MCF 10A (cell line): ENCODE measurements at regions of chr20 and their contacts with region 1.

Region 1: DNA sequence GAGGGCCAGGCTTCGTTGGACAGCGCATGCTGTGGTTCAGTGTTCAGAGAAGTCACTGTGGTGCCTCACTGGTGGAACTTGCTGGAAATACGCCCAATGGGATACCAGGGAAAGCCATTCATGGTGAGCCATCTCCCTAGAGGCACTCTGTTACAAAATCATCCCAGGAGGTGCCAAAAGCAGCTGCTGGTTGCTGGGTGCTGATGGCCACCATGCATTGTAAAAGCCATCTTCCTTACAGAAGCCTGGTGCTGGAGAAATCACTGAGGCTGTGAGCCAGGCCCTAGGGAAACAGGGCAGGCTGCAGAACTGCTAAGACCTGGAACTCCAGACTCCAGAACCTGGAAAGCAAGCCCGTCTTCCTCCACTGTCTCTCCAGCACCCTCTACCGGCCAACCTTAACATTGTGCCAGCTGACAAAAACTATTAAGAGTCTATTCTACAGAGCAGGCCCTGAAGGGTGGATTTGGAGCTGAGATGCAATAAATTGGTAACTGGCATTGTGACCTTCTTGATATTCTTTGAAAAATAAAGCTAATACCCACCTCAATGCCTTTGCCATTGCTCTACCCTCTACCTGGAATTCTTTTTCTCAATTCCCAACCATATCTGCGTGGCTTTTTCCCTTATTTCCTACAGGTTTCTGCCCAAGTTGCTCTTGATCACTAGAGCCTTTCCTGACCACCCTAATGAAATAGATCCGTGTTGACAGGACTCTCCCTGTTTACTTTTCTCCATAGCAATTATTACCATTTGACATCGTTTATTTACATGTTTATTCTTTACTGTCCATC is 18.5 kb downstream of the SNRPB start:
- DNase-seq: peak; percentile 81
- H3K4me3 Mint-ChIP-seq: no peak overlapping the region
- H3K27ac Mint-ChIP-seq: no peak overlapping the region
- H3K4me1 Mint-ChIP-seq: peaks cover 31% of the 10 kb centered on the region
- H3K27me3 Mint-ChIP-seq: no peaks in the 10 kb centered on the region
- CTCF ChIP-seq: peak; percentile 70

Region 2: GRCh38 chr20:1965520-1966351 is 486.4 kb before region 1 on chr20:
- CTCF ChIA-PET with region 1: interaction called, 3 read pairs
- POLR2A ChIA-PET with region 1: no interaction called
- intact Hi-C with region 1: loop called (anchors 10 kb)
- DNase-seq: peak; percentile 73
- H3K4me3 Mint-ChIP-seq: no peak overlapping the region
- H3K27ac Mint-ChIP-seq: no peak overlapping the region
- H3K4me1 Mint-ChIP-seq: no peaks in the 10 kb centered on the region
- H3K27me3 Mint-ChIP-seq: peaks cover 58% of the 10 kb centered on the region
- CTCF ChIP-seq: peak; percentile 94

Region 3: GRCh38 chr20:2206957-2207769 is 245.0 kb before region 1 on chr20:
- CTCF ChIA-PET with region 1: interaction called, 62 read pairs
- POLR2A ChIA-PET with region 1: interaction called, 8 read pairs
- intact Hi-C with region 1: loop called (anchors 1 kb)
- DNase-seq: peak; percentile 64
- H3K4me3 Mint-ChIP-seq: peak overlapping the region; percentile 65
- H3K27ac Mint-ChIP-seq: no peak overlapping the region
- H3K4me1 Mint-ChIP-seq: no peaks in the 10 kb centered on the region
- H3K27me3 Mint-ChIP-seq: peaks cover 8% of the 10 kb centered on the region
- CTCF ChIP-seq: peak; percentile 93

Region 4: GRCh38 chr20:2357114-2357513 is 95.0 kb before region 1 on chr20:
- CTCF ChIA-PET with region 1: interaction called, 22 read pairs
- POLR2A ChIA-PET with region 1: interaction called, 5 read pairs
- intact Hi-C with region 1: no loop called
- DNase-seq: no peak
- H3K4me3 Mint-ChIP-seq: no peak overlapping the region
- H3K27ac Mint-ChIP-seq: no peak overlapping the region
- H3K4me1 Mint-ChIP-seq: peaks cover 12% of the 10 kb centered on the region
- H3K27me3 Mint-ChIP-seq: no peaks in the 10 kb centered on the region
- CTCF ChIP-seq: no peak

Region 5: GRCh38 chr20:2402271-2402980 is 49.7 kb before region 1 on chr20:
- CTCF ChIA-PET with region 1: interaction called, 14 read pairs
- POLR2A ChIA-PET with region 1: no interaction called
- intact Hi-C with region 1: loop called (anchors 10 kb)
- DNase-seq: peak; percentile 55
- H3K4me3 Mint-ChIP-seq: no peak overlapping the region
- H3K27ac Mint-ChIP-seq: no peak overlapping the region
- H3K4me1 Mint-ChIP-seq: no peaks in the 10 kb centered on the region
- H3K27me3 Mint-ChIP-seq: no peaks in the 10 kb centered on the region
- CTCF ChIP-seq: peak; percentile 43

Region 6: GRCh38 chr20:2429061-2429460 is 23.1 kb before region 1 on chr20:
- CTCF ChIA-PET with region 1: interaction called, 32 read pairs
- POLR2A ChIA-PET with region 1: interaction called, 4 read pairs
- intact Hi-C with region 1: no loop called
- DNase-seq: no peak
- H3K4me3 Mint-ChIP-seq: no peak overlapping the region
- H3K27ac Mint-ChIP-seq: no peak overlapping the region
- H3K4me1 Mint-ChIP-seq: no peaks in the 10 kb centered on the region
- H3K27me3 Mint-ChIP-seq: peaks cover 18% of the 10 kb centered on the region
- CTCF ChIP-seq: no peak